Psoas muscle (tissue), 8 donors: ENCODE measurements at regions of chr6 and their contacts with region 1.

Region 1: DNA sequence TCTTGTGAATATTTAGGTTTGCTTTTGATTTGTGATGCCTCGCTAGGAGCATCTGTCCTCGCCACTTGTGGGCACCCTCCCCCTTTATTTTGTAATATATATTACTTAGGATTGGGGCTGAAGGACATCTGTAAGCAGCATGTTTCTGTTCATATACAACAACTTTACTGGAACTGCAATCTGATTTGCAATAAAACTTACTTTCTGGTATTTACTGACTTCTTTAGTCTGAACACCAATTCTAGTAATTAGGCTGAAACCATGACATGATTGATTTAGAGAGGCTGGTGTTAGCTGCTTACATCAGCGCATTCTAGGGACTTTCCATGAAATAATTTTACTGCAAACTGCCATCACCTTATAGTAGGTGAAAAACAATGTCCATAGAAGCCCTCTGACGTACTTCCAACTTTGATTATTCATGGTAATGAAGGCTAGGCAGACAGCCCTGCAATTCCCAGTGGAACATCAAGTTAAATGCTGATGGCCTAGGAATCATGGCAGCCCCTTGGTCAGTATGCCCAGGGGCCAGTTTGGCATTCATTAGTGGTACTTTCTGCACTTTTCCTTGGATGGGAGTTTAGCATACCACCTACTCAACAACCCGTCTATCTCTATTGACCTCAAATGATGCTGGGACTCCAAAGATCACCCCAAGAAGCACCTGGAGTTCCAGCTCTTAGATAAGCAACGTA is 132.9 kb upstream of the MCHR2 start:
- DNase-seq: no peak
- ATAC-seq: no peak
- H3K4me3 ChIP-seq: no peak overlapping the region
- H3K27ac ChIP-seq: no peak overlapping the region
- H3K4me1 ChIP-seq: no peaks in the 10 kb centered on the region
- H3K27me3 ChIP-seq: no peaks in the 10 kb centered on the region
- CTCF ChIP-seq: no peak

Region 2: DNA sequence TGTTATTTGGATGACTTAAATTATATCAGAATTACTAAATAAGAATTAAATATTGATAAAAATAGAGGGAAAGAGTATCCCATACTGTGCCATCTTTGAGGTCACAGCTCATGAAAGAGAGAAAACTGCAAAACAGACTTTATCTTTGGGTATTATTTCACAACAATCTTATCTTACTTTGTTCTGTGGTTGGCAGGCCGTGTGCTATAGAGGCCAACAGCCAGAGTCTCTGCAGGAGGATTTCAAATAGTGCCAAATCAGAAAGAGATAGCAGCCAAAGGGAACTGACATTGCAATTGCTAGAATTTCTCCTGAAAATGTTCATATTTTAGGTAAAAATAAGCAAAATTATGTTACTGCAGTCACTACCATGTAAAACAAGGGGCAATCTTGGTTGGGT is 1620.8 kb after region 1 on chr6:
- intact Hi-C with region 1: loop called in 1 of 2 experiments (anchors 5 kb)
- DNase-seq: no peak
- ATAC-seq: no peak
- H3K4me3 ChIP-seq: no peak overlapping the region
- H3K27ac ChIP-seq: no peak overlapping the region
- H3K4me1 ChIP-seq: no peaks in the 10 kb centered on the region
- H3K27me3 ChIP-seq: no peaks in the 10 kb centered on the region
- CTCF ChIP-seq: no peak